ENCODE measurements at regions of chr6 and their contacts with region 1.

Region 1: DNA sequence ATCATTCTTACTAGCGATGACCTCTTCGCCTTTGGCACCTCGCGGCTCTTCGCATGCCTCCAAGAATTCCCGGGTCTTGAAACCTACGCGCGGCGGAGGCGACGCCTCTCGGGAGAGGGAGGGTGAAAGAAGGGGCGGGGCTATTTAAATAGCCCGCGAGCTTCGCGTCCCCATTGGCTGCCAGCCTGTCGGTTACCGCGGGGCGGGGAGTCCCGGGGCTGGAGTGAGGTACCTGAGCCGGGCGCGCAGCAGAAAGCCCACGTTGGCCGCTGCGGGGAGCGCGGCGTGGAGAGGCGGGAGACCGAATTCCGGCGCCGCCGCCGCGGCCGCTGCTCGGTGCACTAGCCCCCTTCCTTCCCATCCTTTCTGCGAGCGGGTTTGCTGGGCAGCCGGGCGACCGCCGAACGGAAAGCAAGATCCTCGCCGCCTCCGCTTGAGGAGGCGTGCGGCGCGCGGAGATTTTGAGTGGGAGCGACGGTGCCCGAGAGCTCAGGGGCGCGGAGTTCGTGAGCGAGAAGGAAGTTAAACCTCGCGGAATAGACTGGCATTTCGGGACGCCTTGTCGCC is at the start of gene BMP6:
- DNase-seq: peak; percentile 69
- H3K4me3 ChIP-seq: peak within 1 kb of the TSS; percentile 64
- H3K27ac ChIP-seq: no peak within 1 kb of the TSS
- H3K4me1 ChIP-seq: peaks cover 19% of the 10 kb centered on the region
- CTCF ChIP-seq: no peak
- total RNA-seq, gene BMP6: 0.10 and 0.38 TPM in 2 replicates

Region 2: DNA sequence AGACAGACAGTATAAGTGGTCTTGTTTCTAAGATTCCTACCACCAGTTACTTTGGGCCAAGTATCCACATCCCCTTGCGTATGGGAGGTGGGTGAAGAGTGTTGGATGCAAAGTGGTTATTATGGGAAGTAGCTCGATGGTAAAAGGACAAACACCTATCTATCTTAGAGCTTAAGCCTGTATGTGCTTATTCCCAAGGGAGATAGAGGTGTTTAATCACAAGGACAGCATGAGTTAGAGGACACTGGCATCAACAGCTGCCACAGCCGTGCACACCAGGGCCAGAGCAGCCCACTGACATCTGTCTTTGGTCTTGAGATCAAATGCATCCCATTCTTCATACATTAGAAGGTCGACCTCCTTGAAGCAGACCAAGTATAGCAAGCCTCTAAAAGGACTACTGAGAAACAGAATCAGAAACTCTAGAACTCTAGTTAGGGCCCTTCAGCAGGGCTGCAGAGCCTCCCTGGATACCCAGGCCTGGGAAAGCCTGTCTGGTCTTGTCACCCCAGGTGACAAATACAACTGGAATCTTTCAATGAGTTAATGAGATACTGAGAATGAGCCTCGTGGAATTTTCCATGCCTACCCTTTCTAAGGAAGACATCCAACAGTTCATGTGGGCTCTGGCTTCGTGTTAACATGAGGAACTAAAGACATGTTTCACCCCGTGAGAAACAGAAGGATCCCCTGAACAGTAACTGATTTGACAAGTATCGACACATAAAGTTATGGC is 156.0 kb after region 1 on chr6:
- CTCF ChIA-PET with region 1: no interaction called
- POLR2A ChIA-PET with region 1: interaction called, 4 read pairs
- intact Hi-C with region 1: loop called (anchors 5 kb)
- DNase-seq: no peak
- H3K4me3 ChIP-seq: no peak overlapping the region
- H3K27ac ChIP-seq: no peak overlapping the region
- H3K4me1 ChIP-seq: no peaks in the 10 kb centered on the region
- CTCF ChIP-seq: no peak

Region 3: DNA sequence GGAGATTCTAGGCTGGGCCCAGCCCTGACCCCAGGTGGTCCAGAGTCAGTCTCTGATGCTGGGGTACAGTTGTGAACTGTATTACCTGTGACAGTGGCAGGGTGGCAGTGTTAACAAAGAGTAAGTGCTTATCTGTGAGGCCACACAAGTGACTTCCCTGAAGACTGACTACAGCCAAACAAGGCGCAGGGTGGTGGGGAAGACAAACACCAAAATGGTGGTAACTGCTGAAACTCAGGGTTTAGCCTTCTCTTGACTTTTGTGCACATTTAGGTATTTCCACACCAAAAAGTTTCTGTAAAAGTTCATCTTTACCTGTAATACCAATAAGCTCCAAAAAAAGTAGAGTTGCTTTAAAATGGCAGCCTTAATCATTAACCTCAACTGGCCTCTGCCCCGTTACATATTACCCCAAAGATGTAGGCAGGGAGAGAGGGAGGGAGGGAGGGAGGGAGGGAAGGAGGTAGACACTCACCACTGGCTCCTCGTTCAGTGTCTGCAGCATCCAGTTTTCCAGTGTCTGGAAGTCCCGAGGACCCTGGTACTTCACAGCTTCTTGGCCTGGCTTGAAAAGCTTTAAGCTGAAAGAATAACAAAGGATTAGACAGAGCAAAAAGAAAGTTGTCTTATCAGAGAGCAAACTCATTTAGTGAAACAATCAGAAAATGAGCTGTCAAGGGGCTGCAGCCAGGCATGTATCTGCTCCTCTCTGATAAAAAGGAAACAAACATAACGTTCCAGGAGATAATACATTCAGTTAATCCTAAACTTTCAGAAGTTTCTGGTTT is 173.4 kb after region 1 on chr6:
- CTCF ChIA-PET with region 1: interaction called, 4 read pairs
- POLR2A ChIA-PET with region 1: no interaction called
- intact Hi-C with region 1: loop called (anchors 2 kb)
- DNase-seq: peak; percentile 59
- H3K4me3 ChIP-seq: no peak overlapping the region
- H3K27ac ChIP-seq: peak overlapping the region; percentile 78
- H3K4me1 ChIP-seq: peaks cover 65% of the 10 kb centered on the region
- CTCF ChIP-seq: peak; percentile 76

Region 4: GRCh38 chr6:7992002-7992815 is 266.3 kb after region 1 on chr6:
- CTCF ChIA-PET with region 1: interaction called, 17 read pairs
- POLR2A ChIA-PET with region 1: interaction called, 7 read pairs
- intact Hi-C with region 1: loop called (anchors 1 kb)
- DNase-seq: peak; percentile 76
- H3K4me3 ChIP-seq: no peak overlapping the region
- H3K27ac ChIP-seq: no peak overlapping the region
- H3K4me1 ChIP-seq: peaks cover 10% of the 10 kb centered on the region
- CTCF ChIP-seq: peak; percentile 89

Region 5: GRCh38 chr6:8006208-8006607 is 280.3 kb after region 1 on chr6:
- CTCF ChIA-PET with region 1: interaction called, 3 read pairs
- POLR2A ChIA-PET with region 1: interaction called, 3 read pairs
- intact Hi-C with region 1: loop called (anchors 1 kb)
- DNase-seq: peak; percentile 48
- H3K4me3 ChIP-seq: no peak overlapping the region
- H3K27ac ChIP-seq: no peak overlapping the region
- H3K4me1 ChIP-seq: peaks cover 3% of the 10 kb centered on the region
- CTCF ChIP-seq: peak; percentile 86

Region 6: GRCh38 chr6:8219352-8219943 is 493.5 kb after region 1 on chr6:
- CTCF ChIA-PET with region 1: no interaction called
- POLR2A ChIA-PET with region 1: interaction called, 3 read pairs
- intact Hi-C with region 1: loop called (anchors 5 kb)
- DNase-seq: peak; percentile 43
- H3K4me3 ChIP-seq: no peak overlapping the region
- H3K27ac ChIP-seq: no peak overlapping the region
- H3K4me1 ChIP-seq: no peaks in the 10 kb centered on the region
- CTCF ChIP-seq: peak; percentile 88